CD4-positive, alpha-beta memory T cell (primary cell): ENCODE measurements at regions of chr5 and their contacts with region 1.

Region 1: GRCh38 chr5:50440651-50441492 is at the start of gene EMB:
- DNase-seq: peak; percentile 83 to 85 (median 84)
- H3K4me3 ChIP-seq: peak within 1 kb of the TSS; percentile 63 to 76
- H3K4me3 Mint-ChIP-seq: peak within 1 kb of the TSS; percentile 94 to 99 (median 98)
- H3K27ac ChIP-seq: peak within 1 kb of the TSS; percentile 75
- H3K27ac Mint-ChIP-seq: peak within 1 kb of the TSS; percentile 94 to 98 (median 96)
- H3K4me1 ChIP-seq: peaks cover 74% of the 10 kb centered on the region
- H3K4me1 Mint-ChIP-seq: peaks cover 38 to 90% (median 64%) of the 10 kb centered on the region in 4 donors
- H3K27me3 ChIP-seq: no peaks in the 10 kb centered on the region
- H3K27me3 Mint-ChIP-seq: no peaks in the 10 kb centered on the region
- total RNA-seq, gene EMB: 264 to 277 TPM

Region 2: GRCh38 chr5:50415912-50416311 is 25.0 kb before region 1 on chr5:
- CTCF ChIA-PET with region 1: interaction called, 5 read pairs
- POLR2A ChIA-PET with region 1: interaction called, 20 read pairs
- intact Hi-C with region 1: loop called (anchors 1 kb)
- DNase-seq: peak; percentile 62 to 76 (median 70)
- H3K4me3 ChIP-seq: no peak overlapping the region
- H3K4me3 Mint-ChIP-seq: peak overlapping the region in 7 of 8 donors; percentile 12 to 79 (median 61)
- H3K27ac ChIP-seq: no peak overlapping the region
- H3K27ac Mint-ChIP-seq: peak overlapping the region in 6 of 7 donors; percentile 75 to 94 (median 88)
- H3K4me1 ChIP-seq: peaks cover 87% of the 10 kb centered on the region
- H3K4me1 Mint-ChIP-seq: peaks cover 63 to 93% (median 78%) of the 10 kb centered on the region in 4 donors
- H3K27me3 ChIP-seq: no peaks in the 10 kb centered on the region
- H3K27me3 Mint-ChIP-seq: no peaks in the 10 kb centered on the region

Region 3: GRCh38 chr5:50501491-50502228 is 60.8 kb after region 1 on chr5:
- CTCF ChIA-PET with region 1: interaction called, 7 read pairs
- POLR2A ChIA-PET with region 1: interaction called, 11 read pairs
- intact Hi-C with region 1: no loop called
- DNase-seq: peak in 4 of 5 donors; percentile 5 to 15 (median 8)
- H3K4me3 ChIP-seq: no peak overlapping the region
- H3K4me3 Mint-ChIP-seq: peak overlapping the region; percentile 37 to 81 (median 60)
- H3K27ac ChIP-seq: no peak overlapping the region
- H3K27ac Mint-ChIP-seq: peak overlapping the region; percentile 47 to 86 (median 72)
- H3K4me1 ChIP-seq: peaks cover 11% of the 10 kb centered on the region
- H3K4me1 Mint-ChIP-seq: peaks cover 14 to 38% (median 21%) of the 10 kb centered on the region in 4 donors
- H3K27me3 ChIP-seq: no peaks in the 10 kb centered on the region
- H3K27me3 Mint-ChIP-seq: no peaks in the 10 kb centered on the region

Region 4: DNA sequence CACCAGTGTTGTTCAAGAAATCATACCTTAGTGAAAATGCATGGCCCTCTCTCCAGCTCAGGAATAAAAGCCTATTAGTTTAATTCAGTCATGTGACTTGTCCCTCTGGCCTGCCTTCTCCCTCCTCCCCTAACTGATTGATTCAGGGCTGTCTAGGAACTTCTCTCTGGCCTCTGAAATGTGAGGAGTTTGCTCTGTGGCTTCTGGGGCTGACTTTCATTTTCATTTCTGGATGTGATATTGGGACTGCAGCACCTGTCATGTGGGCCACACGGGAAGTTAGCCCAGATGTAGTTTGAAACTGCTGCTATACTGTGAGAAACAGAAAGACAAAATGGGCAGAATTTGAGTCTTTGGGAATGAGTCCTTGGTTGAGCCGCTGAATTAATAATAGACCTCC is 270.4 kb after region 1 on chr5:
- CTCF ChIA-PET with region 1: no interaction called
- POLR2A ChIA-PET with region 1: interaction called, 5 read pairs
- intact Hi-C with region 1: loop called (anchors 2 kb)
- DNase-seq: peak; percentile 69 to 87 (median 77)
- H3K4me3 ChIP-seq: peak overlapping the region; percentile 1 to 33
- H3K4me3 Mint-ChIP-seq: peak overlapping the region; percentile 79 to 91 (median 85)
- H3K27ac ChIP-seq: peak overlapping the region; percentile 65
- H3K27ac Mint-ChIP-seq: peak overlapping the region; percentile 90 to 96 (median 95)
- H3K4me1 ChIP-seq: peaks cover 94% of the 10 kb centered on the region
- H3K4me1 Mint-ChIP-seq: peaks cover 61 to 89% (median 74%) of the 10 kb centered on the region in 4 donors
- H3K27me3 ChIP-seq: no peaks in the 10 kb centered on the region
- H3K27me3 Mint-ChIP-seq: no peaks in the 10 kb centered on the region

Region 5: GRCh38 chr5:50744776-50745175 is 303.9 kb after region 1 on chr5:
- CTCF ChIA-PET with region 1: interaction called, 8 read pairs
- POLR2A ChIA-PET with region 1: interaction called, 25 read pairs
- intact Hi-C with region 1: no loop called
- DNase-seq: peak; percentile 25 to 47 (median 32)
- H3K4me3 ChIP-seq: peak overlapping the region; percentile 6 to 32
- H3K4me3 Mint-ChIP-seq: peak overlapping the region; percentile 78 to 94 (median 89)
- H3K27ac ChIP-seq: peak overlapping the region; percentile 56
- H3K27ac Mint-ChIP-seq: peak overlapping the region; percentile 80 to 97 (median 94)
- H3K4me1 ChIP-seq: peaks cover 82% of the 10 kb centered on the region
- H3K4me1 Mint-ChIP-seq: peaks cover 64 to 85% (median 71%) of the 10 kb centered on the region in 4 donors
- H3K27me3 ChIP-seq: no peaks in the 10 kb centered on the region
- H3K27me3 Mint-ChIP-seq: no peaks in the 10 kb centered on the region